OCI-LY7 (cell line): ENCODE measurements at regions of chr2 and their contacts with region 1.

Region 1: DNA sequence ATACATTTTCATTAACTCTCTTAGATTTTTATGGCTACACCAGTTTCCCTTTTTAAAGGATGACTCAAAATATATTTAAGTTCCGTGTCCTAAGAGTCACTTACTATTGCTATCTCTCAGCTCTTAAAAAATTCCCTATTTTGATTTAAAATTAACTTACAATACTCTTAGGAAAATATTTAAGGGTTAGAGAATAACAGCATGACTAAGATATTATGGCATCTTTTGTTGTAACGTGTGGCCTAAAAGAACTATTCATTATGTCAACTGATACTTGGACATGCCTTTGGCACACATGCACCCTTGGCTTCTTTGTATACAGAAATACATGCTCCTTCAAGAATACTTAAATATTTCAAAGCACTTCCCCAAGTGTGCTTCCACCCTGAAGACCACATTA is 42.3 kb downstream of the SCN3A start:
- DNase-seq: no peak
- H3K4me3 ChIP-seq: no peak overlapping the region
- H3K27ac ChIP-seq: no peak overlapping the region
- H3K4me1 ChIP-seq: no peaks in the 10 kb centered on the region
- CTCF ChIP-seq: no peak

Region 2: DNA sequence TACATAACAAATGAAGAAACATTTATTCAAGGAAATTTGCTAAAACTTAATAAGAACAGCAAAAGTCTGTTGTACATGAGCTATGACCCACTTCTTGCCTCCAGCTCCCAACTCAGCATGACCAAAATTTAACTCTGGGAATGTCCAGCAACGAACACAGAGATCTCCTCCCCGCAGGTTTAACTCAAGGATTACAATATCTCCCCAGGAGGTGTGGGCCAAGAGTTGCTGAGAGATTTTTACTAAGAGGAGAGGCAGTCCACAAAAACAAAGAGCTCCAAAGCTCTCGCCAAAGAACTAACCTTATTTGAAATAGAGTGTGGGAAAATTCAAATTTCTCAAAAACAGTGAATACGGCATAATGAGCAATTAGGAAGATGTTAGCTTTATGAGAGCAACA is 858.7 kb before region 1 on chr2:
- CTCF ChIA-PET with region 1: no interaction called
- POLR2A ChIA-PET with region 1: no interaction called
- intact Hi-C with region 1: loop called (anchors 10 kb)
- DNase-seq: no peak
- H3K4me3 ChIP-seq: no peak overlapping the region
- H3K27ac ChIP-seq: no peak overlapping the region
- H3K4me1 ChIP-seq: no peaks in the 10 kb centered on the region
- CTCF ChIP-seq: no peak

Region 3: GRCh38 chr2:165114346-165114939 is 47.1 kb before region 1 on chr2:
- CTCF ChIA-PET with region 1: no interaction called
- POLR2A ChIA-PET with region 1: no interaction called
- intact Hi-C with region 1: no loop called
- DNase-seq: no peak
- H3K4me3 ChIP-seq: no peak overlapping the region
- H3K27ac ChIP-seq: no peak overlapping the region
- H3K4me1 ChIP-seq: no peaks in the 10 kb centered on the region
- CTCF ChIP-seq: no peak

Region 4: DNA sequence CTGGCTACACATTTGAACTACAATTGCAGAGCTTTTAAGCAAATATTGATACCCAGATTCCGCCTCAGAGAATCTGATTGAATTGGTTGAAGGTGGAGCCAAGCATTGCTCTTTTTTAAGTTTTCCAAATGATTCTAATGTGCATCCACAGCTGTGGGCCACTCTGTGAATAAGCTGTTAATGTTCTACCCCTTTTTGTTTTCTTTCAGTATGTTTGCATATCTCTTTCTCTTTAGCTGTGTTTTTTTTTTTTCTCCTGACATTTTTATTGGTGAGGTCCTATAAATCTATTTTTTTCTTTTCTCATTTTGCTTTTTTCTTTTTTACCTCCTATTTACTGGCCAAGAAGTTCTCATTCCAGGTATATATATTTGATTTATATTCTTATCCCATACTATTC is 35.8 kb after region 1 on chr2:
- CTCF ChIA-PET with region 1: no interaction called
- POLR2A ChIA-PET with region 1: interaction called, 10 read pairs
- intact Hi-C with region 1: no loop called
- DNase-seq: no peak
- H3K4me3 ChIP-seq: peak overlapping the region; percentile 25
- H3K27ac ChIP-seq: peak overlapping the region; percentile 46
- H3K4me1 ChIP-seq: peaks cover 94% of the 10 kb centered on the region
- CTCF ChIP-seq: no peak